Activated naive CD4-positive, alpha-beta T cell treated with anti-CD3 and anti-CD28 coated beads for 36 hours (primary cell): ENCODE measurements at regions of chr17 and their contacts with region 1.

Region 1: DNA sequence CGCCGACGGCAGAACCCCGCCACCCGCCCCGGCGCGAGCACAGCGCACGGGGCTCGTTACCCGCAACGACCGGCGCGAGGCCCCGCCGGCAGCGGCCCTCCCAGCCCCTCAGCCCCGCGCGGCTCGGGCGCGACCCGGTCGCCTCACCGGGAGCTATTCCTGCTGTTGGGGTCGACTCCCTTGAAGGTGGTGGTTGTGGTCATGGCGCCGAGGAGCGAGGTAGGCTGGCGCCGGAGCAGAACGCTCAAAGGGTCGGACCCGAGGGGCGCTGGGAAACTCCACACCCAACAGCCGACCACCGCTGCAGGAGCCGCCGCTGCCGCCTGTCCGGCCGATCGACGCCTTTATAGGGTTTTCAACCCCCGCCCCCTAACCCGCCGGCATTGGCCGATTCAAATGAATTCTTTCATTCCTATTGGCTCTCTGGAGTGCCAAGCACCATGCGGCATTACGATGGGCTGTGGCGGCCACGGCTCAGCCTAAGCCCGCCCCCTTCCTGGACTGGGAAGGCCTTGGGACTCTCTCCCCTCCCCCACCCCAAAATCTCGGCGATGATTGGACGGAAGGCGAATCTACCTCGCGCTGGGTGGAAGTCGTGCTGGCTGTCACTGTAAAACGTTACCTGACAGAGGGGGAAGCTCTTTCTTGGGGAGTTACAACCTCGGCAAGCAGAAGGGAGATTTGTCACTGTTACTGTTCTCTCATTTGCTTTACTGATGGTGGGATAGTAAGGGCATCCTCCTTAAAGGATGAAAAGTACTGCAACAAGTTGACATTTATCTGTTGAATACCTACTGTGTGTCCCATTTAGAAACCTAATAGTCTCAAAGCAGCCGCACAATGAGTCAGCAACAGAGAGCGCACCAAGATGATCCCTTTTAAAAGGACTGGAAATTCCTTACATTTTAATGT is at the start of gene JPT1:
- DNase-seq: peak; percentile 100
- H3K4me3 Mint-ChIP-seq: peak within 1 kb of the TSS; percentile 94
- H3K27ac Mint-ChIP-seq: peak within 1 kb of the TSS; percentile 78
- H3K4me1 Mint-ChIP-seq: peaks cover 30% of the 10 kb centered on the region
- H3K27me3 Mint-ChIP-seq: no peaks in the 10 kb centered on the region
- total RNA-seq, gene JPT1: 242 to 258 TPM

Region 2: GRCh38 chr17:74873038-74873873 is 281.2 kb before region 1 on chr17:
- CTCF ChIA-PET with region 1: no interaction called
- intact Hi-C with region 1: loop called (anchors 2 kb)
- DNase-seq: peak; percentile 100
- H3K4me3 Mint-ChIP-seq: peak overlapping the region; percentile 88
- H3K27ac Mint-ChIP-seq: peak overlapping the region; percentile 91
- H3K4me1 Mint-ChIP-seq: peaks cover 27% of the 10 kb centered on the region
- H3K27me3 Mint-ChIP-seq: no peaks in the 10 kb centered on the region

Region 3: GRCh38 chr17:75034236-75034908 is 120.1 kb before region 1 on chr17:
- CTCF ChIA-PET with region 1: no interaction called
- intact Hi-C with region 1: loop called (anchors 1 kb)
- DNase-seq: peak; percentile 96
- H3K4me3 Mint-ChIP-seq: peak overlapping the region; percentile 95
- H3K27ac Mint-ChIP-seq: peak overlapping the region; percentile 93
- H3K4me1 Mint-ChIP-seq: peaks cover 46% of the 10 kb centered on the region
- H3K27me3 Mint-ChIP-seq: peaks cover 3% of the 10 kb centered on the region

Region 4: GRCh38 chr17:75131280-75132017 is 23.0 kb before region 1 on chr17 and contains the start of gene NT5C:
- CTCF ChIA-PET with region 1: interaction called, 13 read pairs
- intact Hi-C with region 1: loop called (anchors 1 kb)
- DNase-seq: peak; percentile 71
- H3K4me3 Mint-ChIP-seq: peak within 1 kb of the TSS; percentile 85
- H3K27ac Mint-ChIP-seq: peak within 1 kb of the TSS; percentile 86
- H3K4me1 Mint-ChIP-seq: peaks cover 16% of the 10 kb centered on the region
- H3K27me3 Mint-ChIP-seq: no peaks in the 10 kb centered on the region
- total RNA-seq, gene NT5C: 49.7 to 55.2 TPM

Region 5: GRCh38 chr17:75173526-75173925 is 19.1 kb after region 1 on chr17:
- CTCF ChIA-PET with region 1: interaction called, 7 read pairs
- intact Hi-C with region 1: loop called (anchors 1 kb)
- DNase-seq: no peak
- H3K4me3 Mint-ChIP-seq: no peak overlapping the region
- H3K27ac Mint-ChIP-seq: peak overlapping the region; percentile 2
- H3K4me1 Mint-ChIP-seq: peaks cover 28% of the 10 kb centered on the region
- H3K27me3 Mint-ChIP-seq: no peaks in the 10 kb centered on the region

Region 6: DNA sequence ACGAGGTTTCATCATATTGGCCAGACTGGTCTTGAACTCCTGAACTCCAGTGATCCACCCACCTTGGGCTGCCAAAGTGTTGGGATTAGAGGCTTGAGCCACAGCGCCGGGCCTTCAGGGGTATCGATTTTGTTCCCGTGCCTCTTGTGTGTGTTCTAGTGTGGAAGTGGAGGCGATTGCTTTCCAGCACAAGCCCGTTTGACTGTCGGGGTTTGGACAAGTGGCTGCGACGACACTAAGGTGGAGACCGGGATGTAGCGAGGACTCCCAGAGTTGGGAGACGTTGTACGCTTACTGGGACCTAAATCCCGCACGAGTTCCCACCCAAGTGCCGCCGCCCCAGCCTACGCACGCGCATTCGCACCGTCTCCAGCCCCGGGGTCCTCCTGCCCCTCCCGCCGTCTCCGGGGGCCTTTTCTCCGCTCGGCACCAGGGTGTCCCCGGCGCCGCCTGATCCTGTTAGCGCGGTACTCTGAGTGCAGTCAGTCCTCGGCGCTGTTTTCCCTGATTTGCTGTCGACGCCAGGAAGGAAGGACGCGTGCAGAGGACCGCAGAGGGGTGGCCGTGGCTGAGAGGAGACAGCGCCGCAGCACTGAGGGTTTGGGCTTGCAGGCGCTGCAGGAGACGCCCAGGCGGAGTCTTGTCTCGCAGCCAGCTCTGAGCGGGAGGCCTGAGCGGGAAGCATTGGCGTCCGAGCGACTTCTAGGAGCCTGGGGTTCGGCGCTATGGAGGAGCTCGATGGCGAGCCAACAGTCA is 50.8 kb after region 1 on chr17 and contains the start of gene NUP85:
- CTCF ChIA-PET with region 1: interaction called, 5 read pairs
- intact Hi-C with region 1: loop called (anchors 1 kb)
- DNase-seq: peak; percentile 94
- H3K4me3 Mint-ChIP-seq: peak within 1 kb of the TSS; percentile 98
- H3K27ac Mint-ChIP-seq: peak within 1 kb of the TSS; percentile 98
- H3K4me1 Mint-ChIP-seq: peaks cover 24% of the 10 kb centered on the region
- H3K27me3 Mint-ChIP-seq: no peaks in the 10 kb centered on the region
- total RNA-seq, gene NUP85: 112 to 116 TPM

Region 7: GRCh38 chr17:75261336-75262111 is 107.1 kb after region 1 on chr17 and contains the starts of genes GGA3 and MRPS7:
- CTCF ChIA-PET with region 1: no interaction called
- intact Hi-C with region 1: loop called (anchors 1 kb)
- DNase-seq: peak; percentile 98
- H3K4me3 Mint-ChIP-seq: peak within 1 kb of the TSS; percentile 93
- H3K27ac Mint-ChIP-seq: peak within 1 kb of the TSS; percentile 99
- H3K4me1 Mint-ChIP-seq: peaks cover 53% of the 10 kb centered on the region
- H3K27me3 Mint-ChIP-seq: no peaks in the 10 kb centered on the region
- total RNA-seq, gene GGA3: 65.7 to 66.1 TPM
- total RNA-seq, gene MRPS7: 73.3 to 78.3 TPM